Mammary epithelial cell (primary cell): ENCODE measurements at regions of chr6 and their contacts with region 1.

Region 1: GRCh38 chr6:106870069-106870468 is 104.5 kb downstream of the CD24 start:
- DNase-seq: peak; percentile 96
- H3K4me3 ChIP-seq: no peak overlapping the region
- H3K27ac ChIP-seq: peak overlapping the region; percentile 88
- H3K4me1 ChIP-seq: peaks cover 41% of the 10 kb centered on the region
- H3K27me3 ChIP-seq: no peaks in the 10 kb centered on the region
- CTCF ChIP-seq: no peak

Region 2: DNA sequence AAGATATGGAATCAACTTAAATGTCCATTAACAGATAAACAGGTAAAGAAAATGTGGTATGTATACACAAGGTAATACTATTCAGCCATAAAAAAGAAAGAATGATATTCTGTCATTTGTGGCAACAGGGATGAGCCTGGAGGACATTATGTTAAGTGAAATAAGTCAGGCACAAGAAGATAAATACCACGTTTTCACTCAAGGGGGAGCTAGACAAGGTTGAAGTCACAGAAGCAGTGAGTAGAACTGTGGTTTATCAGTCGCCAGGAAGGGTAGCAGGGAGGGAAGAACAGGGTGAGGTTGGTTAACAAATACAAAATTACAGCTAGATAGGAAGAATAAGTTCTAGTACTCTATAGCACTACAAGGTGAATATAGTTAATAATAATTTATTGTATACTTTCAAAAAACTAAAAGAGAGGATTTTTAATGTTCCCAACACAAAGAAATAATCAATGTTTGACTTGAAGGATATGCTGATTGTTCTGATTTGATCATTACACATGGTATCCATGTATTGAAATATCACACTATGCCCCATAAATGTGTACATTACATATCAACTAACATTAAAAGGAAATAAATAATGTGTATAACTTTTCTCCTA is 261.9 kb before region 1 on chr6:
- CTCF ChIA-PET with region 1: no interaction called
- dilution Hi-C with region 1: no loop called
- in situ Hi-C with region 1: no loop called
- intact Hi-C with region 1: loop called (anchors 10 kb)
- DNase-seq: peak; percentile 66
- H3K4me3 ChIP-seq: no peak overlapping the region
- H3K27ac ChIP-seq: no peak overlapping the region
- H3K4me1 ChIP-seq: no peaks in the 10 kb centered on the region
- H3K27me3 ChIP-seq: no peaks in the 10 kb centered on the region
- CTCF ChIP-seq: peak; percentile 64 to 77

Region 3: DNA sequence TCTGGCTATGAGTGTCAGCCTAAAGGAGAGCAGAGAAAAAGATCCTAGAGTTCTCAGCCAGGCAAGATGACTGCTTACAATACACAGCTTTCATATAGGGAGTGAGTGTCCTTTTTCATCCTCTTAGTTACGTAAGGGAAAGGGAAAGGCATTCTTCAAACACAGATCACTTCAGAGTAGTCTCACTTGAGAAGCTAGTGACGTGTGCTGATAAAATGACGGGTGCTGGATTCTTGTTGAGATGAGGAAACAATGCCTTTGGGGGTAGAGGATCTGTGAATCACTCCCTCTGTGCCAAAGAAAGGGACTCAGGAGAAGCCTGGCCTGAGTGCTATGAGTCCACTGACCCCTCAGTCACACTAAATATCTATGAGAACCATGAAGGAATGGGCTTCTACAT is 123.4 kb before region 1 on chr6:
- CTCF ChIA-PET with region 1: no interaction called
- dilution Hi-C with region 1: no loop called
- in situ Hi-C with region 1: no loop called
- intact Hi-C with region 1: loop called (anchors 2 kb)
- DNase-seq: peak; percentile 100
- H3K4me3 ChIP-seq: no peak overlapping the region
- H3K27ac ChIP-seq: peak overlapping the region; percentile 99
- H3K4me1 ChIP-seq: peaks cover 62% of the 10 kb centered on the region
- H3K27me3 ChIP-seq: no peaks in the 10 kb centered on the region
- CTCF ChIP-seq: no peak

Region 4: GRCh38 chr6:106799008-106799894 is 70.8 kb before region 1 on chr6:
- CTCF ChIA-PET with region 1: no interaction called
- dilution Hi-C with region 1: no loop called
- in situ Hi-C with region 1: no loop called
- intact Hi-C with region 1: loop called (anchors 1 kb)
- DNase-seq: peak; percentile 96
- H3K4me3 ChIP-seq: no peak overlapping the region
- H3K27ac ChIP-seq: peak overlapping the region; percentile 90
- H3K4me1 ChIP-seq: peaks cover 38% of the 10 kb centered on the region
- H3K27me3 ChIP-seq: no peaks in the 10 kb centered on the region
- CTCF ChIP-seq: no peak

Region 5: DNA sequence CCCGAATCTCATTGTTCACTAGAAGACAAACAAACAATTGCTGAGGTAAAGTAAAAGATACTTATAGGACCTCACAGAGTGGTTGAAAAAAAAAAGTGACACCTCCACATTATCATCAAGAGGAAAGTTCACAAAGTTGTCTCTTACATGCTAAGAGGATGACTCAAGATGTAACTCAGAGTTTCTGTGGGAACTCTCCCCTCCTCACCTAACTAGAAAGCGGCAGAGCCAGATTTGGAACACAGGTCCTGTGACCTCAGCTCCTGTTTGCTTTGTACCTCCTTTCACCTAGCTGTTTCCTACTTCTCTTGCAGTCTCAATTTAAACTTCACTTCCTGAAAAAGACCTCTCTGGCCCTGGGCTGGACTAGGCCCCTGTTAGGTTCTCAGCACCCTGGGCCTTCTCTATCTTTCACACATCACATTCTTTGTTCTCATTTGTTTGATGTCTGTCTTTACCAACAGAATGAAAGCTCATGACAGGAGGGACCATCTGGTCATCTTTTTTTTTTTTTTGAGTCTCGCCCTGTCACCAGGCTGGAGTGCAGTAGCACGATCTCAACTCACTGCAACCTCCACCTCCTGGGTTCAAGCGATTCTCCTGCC is 43.7 kb after region 1 on chr6:
- CTCF ChIA-PET with region 1: no interaction called
- dilution Hi-C with region 1: loop called (anchors 5 kb)
- in situ Hi-C with region 1: no loop called
- intact Hi-C with region 1: loop called (anchors 1 kb)
- DNase-seq: peak; percentile 89
- H3K4me3 ChIP-seq: no peak overlapping the region
- H3K27ac ChIP-seq: no peak overlapping the region
- H3K4me1 ChIP-seq: peaks cover 4% of the 10 kb centered on the region
- H3K27me3 ChIP-seq: no peaks in the 10 kb centered on the region
- CTCF ChIP-seq: no peak